ENCODE measurements at regions of chrX and their contacts with region 1.

Region 1: GRCh38 chrX:72126539-72127140 is 5.1 kb downstream of the RTL5 start:
- DNase-seq: peak; percentile 84
- H3K4me3 Mint-ChIP-seq: no peak overlapping the region
- H3K27ac Mint-ChIP-seq: no peak overlapping the region
- H3K4me1 Mint-ChIP-seq: peaks cover 49% of the 10 kb centered on the region
- H3K27me3 Mint-ChIP-seq: peaks cover 33% of the 10 kb centered on the region

Region 2: GRCh38 chrX:72018277-72019112 is 108.1 kb before region 1 on chrX:
- CTCF ChIA-PET with region 1: interaction called, 95 read pairs
- POLR2A ChIA-PET with region 1: interaction called, 35 read pairs
- DNase-seq: peak; percentile 84
- H3K4me3 Mint-ChIP-seq: no peak overlapping the region
- H3K27ac Mint-ChIP-seq: no peak overlapping the region
- H3K4me1 Mint-ChIP-seq: peaks cover 31% of the 10 kb centered on the region
- H3K27me3 Mint-ChIP-seq: peaks cover 53% of the 10 kb centered on the region

Region 3: GRCh38 chrX:72238721-72239475 is 112.3 kb after region 1 on chrX and contains the start of gene ERCC6L:
- CTCF ChIA-PET with region 1: no interaction called
- POLR2A ChIA-PET with region 1: no interaction called
- DNase-seq: peak; percentile 88
- H3K4me3 Mint-ChIP-seq: peak within 1 kb of the TSS; percentile 77
- H3K27ac Mint-ChIP-seq: peak within 1 kb of the TSS; percentile 52
- H3K4me1 Mint-ChIP-seq: peaks cover 24% of the 10 kb centered on the region
- H3K27me3 Mint-ChIP-seq: no peaks in the 10 kb centered on the region
- total RNA-seq, gene ERCC6L: 9.0 to 9.5 TPM

Measured in activated CD4-positive, alpha-beta memory T cell treated with anti-CD3 and anti-CD28 coated beads, Interleukin-2, amount 10 ng/mL, durations not matched to agents 7 days and 5 days (primary cell).